ENCODE measurements at regions of chr12 and their contacts with region 1.

Region 1: GRCh38 chr12:89345830-89346740 is 6.2 kb downstream of the DUSP6 start:
- DNase-seq: peak; percentile 53
- H3K4me3 Mint-ChIP-seq: peak overlapping the region; percentile 80
- H3K27ac Mint-ChIP-seq: peak overlapping the region; percentile 88
- H3K4me1 Mint-ChIP-seq: peaks cover 70% of the 10 kb centered on the region
- H3K27me3 Mint-ChIP-seq: no peaks in the 10 kb centered on the region

Region 2: DNA sequence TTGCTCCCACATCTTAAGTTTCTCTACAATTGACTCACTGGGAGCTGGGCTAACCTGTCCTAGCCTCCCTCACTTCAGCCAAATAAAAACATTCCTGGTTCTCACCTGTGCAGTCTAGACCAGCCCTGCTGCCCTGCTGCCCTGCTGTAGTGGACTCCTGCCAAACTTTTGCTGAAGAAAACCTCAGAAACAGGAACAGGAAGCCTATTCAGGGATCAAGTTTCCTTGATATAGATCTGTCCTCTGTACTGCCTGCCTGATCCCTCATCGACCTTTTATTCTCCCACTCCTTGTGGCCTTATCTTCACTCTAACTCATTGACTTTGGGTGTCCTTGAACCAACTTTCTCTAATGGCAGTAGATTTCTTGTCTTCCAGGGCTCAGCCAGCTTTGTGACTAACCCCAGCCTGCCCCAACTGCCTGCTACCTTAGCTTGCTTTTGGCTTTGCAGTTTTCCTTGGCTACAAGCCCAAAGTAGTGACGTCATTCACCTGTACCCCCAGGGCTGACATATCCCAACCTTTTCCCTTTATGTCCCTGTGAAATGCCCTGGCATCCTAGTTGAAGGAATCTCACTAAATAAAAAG is 228.5 kb before region 1 on chr12:
- intact Hi-C with region 1: no loop called
- DNase-seq: no peak
- H3K4me3 Mint-ChIP-seq: no peak overlapping the region
- H3K27ac Mint-ChIP-seq: no peak overlapping the region
- H3K4me1 Mint-ChIP-seq: peaks cover 7% of the 10 kb centered on the region
- H3K27me3 Mint-ChIP-seq: peaks cover 1% of the 10 kb centered on the region

Region 3: GRCh38 chr12:89306827-89307473 is 39.1 kb before region 1 on chr12:
- intact Hi-C with region 1: loop called (anchors 5 kb)
- DNase-seq: no peak
- H3K4me3 Mint-ChIP-seq: no peak overlapping the region
- H3K27ac Mint-ChIP-seq: no peak overlapping the region
- H3K4me1 Mint-ChIP-seq: peaks cover 43% of the 10 kb centered on the region
- H3K27me3 Mint-ChIP-seq: peaks cover 1% of the 10 kb centered on the region